Body of pancreas (tissue), 4 donors: ENCODE measurements at regions of chr18 and their contacts with region 1.

Region 1: GRCh38 chr18:293536-293935 is 25.7 kb upstream of the THOC1 start:
- DNase-seq: no peak
- ATAC-seq: no peak
- H3K4me3 ChIP-seq: no peak overlapping the region
- H3K27ac ChIP-seq: no peak overlapping the region
- H3K4me1 ChIP-seq: no peaks in the 10 kb centered on the region
- H3K27me3 ChIP-seq: no peaks in the 10 kb centered on the region
- CTCF ChIP-seq: peak in 4 of 7 experiments; percentile 25 to 51 (median 32)
- POLR2A ChIP-seq: no peak

Region 2: GRCh38 chr18:111292-112014 is 182.1 kb before region 1 on chr18:
- intact Hi-C with region 1: no loop called
- DNase-seq: peak; percentile 75 to 84 (median 80)
- ATAC-seq: peak; percentile 67
- H3K4me3 ChIP-seq: no peak overlapping the region
- H3K27ac ChIP-seq: peak overlapping the region; percentile 32 to 86 (median 76)
- H3K4me1 ChIP-seq: peaks cover 6% of the 10 kb centered on the region
- H3K27me3 ChIP-seq: no peaks in the 10 kb centered on the region
- CTCF ChIP-seq: peak in 2 of 7 experiments; percentile 18 to 43
- POLR2A ChIP-seq: peak in 2 of 3 donors; percentile 34 to 37

Region 3: DNA sequence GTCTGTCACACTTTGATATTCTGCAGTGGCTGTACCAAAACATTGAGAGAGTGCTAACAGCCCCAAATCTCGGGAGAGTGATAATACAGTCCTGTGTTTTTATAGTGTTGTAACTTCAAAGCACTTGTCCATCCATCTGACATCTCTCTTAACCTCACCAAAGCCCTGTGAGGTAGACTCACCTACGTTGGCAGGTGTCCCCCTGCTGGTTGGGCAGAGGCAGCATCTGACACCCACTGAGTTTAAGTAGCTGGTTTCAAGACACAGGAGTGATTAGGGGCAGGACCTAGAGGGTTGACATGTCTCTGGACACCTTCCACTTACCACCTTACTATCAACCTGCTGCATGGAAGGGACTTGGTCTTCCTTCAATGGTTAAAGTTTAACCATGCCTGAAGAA is 184.0 kb after region 1 on chr18:
- intact Hi-C with region 1: loop called (anchors 10 kb)
- DNase-seq: peak; percentile 64 to 77 (median 70)
- ATAC-seq: peak; percentile 72
- H3K4me3 ChIP-seq: no peak overlapping the region
- H3K27ac ChIP-seq: peak overlapping the region in 2 of 4 donors; percentile 21 to 35
- H3K4me1 ChIP-seq: peaks cover 51% of the 10 kb centered on the region
- H3K27me3 ChIP-seq: no peaks in the 10 kb centered on the region
- CTCF ChIP-seq: peak; percentile 47 to 84 (median 71)
- POLR2A ChIP-seq: no peak

Region 4: GRCh38 chr18:589228-589627 is 295.7 kb after region 1 on chr18:
- intact Hi-C with region 1: no loop called
- DNase-seq: no peak
- ATAC-seq: no peak
- H3K4me3 ChIP-seq: no peak overlapping the region
- H3K27ac ChIP-seq: no peak overlapping the region
- H3K4me1 ChIP-seq: no peaks in the 10 kb centered on the region
- H3K27me3 ChIP-seq: no peaks in the 10 kb centered on the region
- CTCF ChIP-seq: no peak
- POLR2A ChIP-seq: no peak

Region 5: DNA sequence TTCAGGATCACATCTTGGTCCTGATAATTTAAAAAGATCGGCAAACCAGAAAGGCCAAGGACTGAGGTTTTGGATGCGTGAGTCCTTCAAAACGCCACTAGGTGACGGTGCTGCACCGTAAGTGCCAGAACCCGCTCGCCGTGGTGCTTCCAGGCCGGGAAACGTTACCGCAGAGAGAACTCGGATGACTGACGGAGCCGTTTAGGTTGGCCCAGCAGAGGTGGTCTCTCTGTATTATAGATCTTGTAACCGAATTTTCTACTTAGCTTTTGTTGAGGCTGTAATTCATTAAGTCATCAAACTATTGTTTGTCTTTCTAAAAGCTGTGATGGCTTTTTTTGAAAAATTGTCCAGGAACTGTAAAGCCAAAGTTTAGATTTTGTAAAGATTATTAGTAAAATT is 571.3 kb after region 1 on chr18:
- intact Hi-C with region 1: no loop called
- DNase-seq: peak; percentile 73 to 79 (median 76)
- ATAC-seq: peak; percentile 91
- H3K4me3 ChIP-seq: no peak overlapping the region
- H3K27ac ChIP-seq: no peak overlapping the region
- H3K4me1 ChIP-seq: no peaks in the 10 kb centered on the region
- H3K27me3 ChIP-seq: no peaks in the 10 kb centered on the region
- CTCF ChIP-seq: peak; percentile 93 to 99 (median 97)
- POLR2A ChIP-seq: no peak